PC-3 (cell line): ENCODE measurements at regions of chr6 and their contacts with region 1.

Region 1: GRCh38 chr6:4647414-4648365 is 128.5 kb upstream of the CDYL start:
- DNase-seq: peak; percentile 68
- ATAC-seq: peak; percentile 96
- H3K4me3 ChIP-seq: peak overlapping the region; percentile 50
- H3K27ac ChIP-seq: no peak overlapping the region
- H3K4me1 ChIP-seq: 0 out of 2 replicates have a peak, but pooled peaks cover 5% of the 10 kb centered on the region
- H3K27me3 ChIP-seq: no peaks in the 10 kb centered on the region
- CTCF ChIP-seq: no peak

Region 2: DNA sequence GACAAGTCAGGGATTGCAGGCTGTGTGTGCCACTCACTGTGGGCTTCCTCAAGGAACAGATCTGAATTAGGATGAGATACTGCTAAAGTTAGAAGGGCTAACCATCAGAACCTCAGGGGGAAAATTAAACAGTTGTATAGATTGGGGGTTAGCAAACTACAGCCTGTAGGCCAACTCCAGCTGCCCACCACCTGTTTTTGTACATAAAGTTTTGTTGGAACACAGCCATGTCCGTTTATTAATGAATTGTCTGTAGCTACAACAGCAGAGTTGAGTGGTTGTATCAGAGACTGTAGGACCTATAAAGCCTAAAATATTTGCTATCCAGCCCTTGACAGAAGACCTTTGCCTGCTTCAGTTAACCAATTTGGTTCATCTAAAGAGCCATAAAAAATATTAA is 385.2 kb before region 1 on chr6:
- CTCF ChIA-PET with region 1: no interaction called
- POLR2A ChIA-PET with region 1: no interaction called
- intact Hi-C with region 1: no loop called
- DNase-seq: no peak
- ATAC-seq: no peak
- H3K4me3 ChIP-seq: no peak overlapping the region
- H3K27ac ChIP-seq: no peak overlapping the region
- H3K4me1 ChIP-seq: no peaks in the 10 kb centered on the region
- H3K27me3 ChIP-seq: no peaks in the 10 kb centered on the region
- CTCF ChIP-seq: no peak

Region 3: GRCh38 chr6:4687989-4688947 is 40.6 kb after region 1 on chr6:
- CTCF ChIA-PET with region 1: no interaction called
- POLR2A ChIA-PET with region 1: no interaction called
- intact Hi-C with region 1: loop called (anchors 5 kb)
- DNase-seq: peak; percentile 79
- ATAC-seq: peak; percentile 97
- H3K4me3 ChIP-seq: peak overlapping the region; percentile 56
- H3K27ac ChIP-seq: peak overlapping the region; percentile 76
- H3K4me1 ChIP-seq: peaks cover 18% of the 10 kb centered on the region
- H3K27me3 ChIP-seq: no peaks in the 10 kb centered on the region
- CTCF ChIP-seq: no peak

Region 4: GRCh38 chr6:4775584-4776494 is 128.1 kb after region 1 on chr6 and contains the start of gene CDYL:
- CTCF ChIA-PET with region 1: no interaction called
- POLR2A ChIA-PET with region 1: no interaction called
- intact Hi-C with region 1: loop called (anchors 5 kb)
- DNase-seq: peak; percentile 94
- ATAC-seq: peak; percentile 79
- H3K4me3 ChIP-seq: peak within 1 kb of the TSS; percentile 74
- H3K27ac ChIP-seq: peak within 1 kb of the TSS; percentile 39; the same call in 1 of the 2 replicates
- H3K4me1 ChIP-seq: peaks cover 5% of the 10 kb centered on the region; the same call in 1 of the 2 replicates
- H3K27me3 ChIP-seq: no peaks in the 10 kb centered on the region
- CTCF ChIP-seq: peak; percentile 29; the same call in 1 of the 2 replicates
- total RNA-seq, gene CDYL: 34.4 and 38.4 TPM in 2 replicates